Spleen (tissue), 13 donors: ENCODE measurements at regions of chr3 and their contacts with region 1.

Region 1: DNA sequence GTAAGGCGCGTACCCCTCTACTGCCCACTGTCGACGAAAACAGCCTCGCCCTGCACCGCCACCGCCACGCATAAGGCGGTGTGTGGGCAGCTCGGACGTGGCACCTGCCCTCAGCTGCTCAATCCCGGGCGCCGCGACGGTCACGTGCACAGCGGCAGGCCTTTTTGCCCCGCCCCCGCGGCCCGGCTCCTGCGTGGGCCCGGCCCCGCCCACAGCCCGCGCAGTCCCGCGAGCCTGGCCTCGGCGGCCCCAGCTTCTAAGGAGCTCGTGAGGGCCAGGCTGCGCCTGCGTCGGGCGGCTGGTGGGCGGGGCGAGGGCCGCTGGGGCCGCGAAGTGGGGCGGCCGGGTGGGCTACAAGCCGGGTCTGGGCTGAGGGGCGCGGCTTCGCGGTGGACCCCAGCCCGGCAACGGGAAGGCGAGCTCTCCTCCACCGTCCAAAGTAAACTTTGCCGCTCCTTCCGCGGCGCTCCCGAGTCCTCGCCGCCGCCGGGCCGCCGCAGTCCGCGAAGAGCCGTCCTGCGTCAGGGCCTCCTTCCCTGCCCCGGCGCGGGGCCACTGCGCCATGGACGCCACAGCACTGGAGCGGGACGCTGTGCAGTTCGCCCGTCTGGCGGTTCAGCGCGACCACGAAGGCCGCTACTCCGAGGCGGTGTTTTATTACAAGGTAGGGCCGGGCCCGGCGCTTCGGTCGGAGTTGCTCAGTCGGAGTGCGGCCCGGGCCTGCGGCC is at the start of gene CAPN7:
- DNase-seq: peak; percentile 99
- H3K4me3 ChIP-seq: peak within 1 kb of the TSS; percentile 59 to 98 (median 88)
- H3K27ac ChIP-seq: peak within 1 kb of the TSS; percentile 95 to 99 (median 96)
- H3K4me1 ChIP-seq: peaks cover 18 to 63% (median 50%) of the 10 kb centered on the region in 6 donors
- H3K27me3 ChIP-seq: no peaks in the 10 kb centered on the region
- CTCF ChIP-seq: peak in 10 of 11 experiments; percentile 23 to 65 (median 50)
- POLR2A ChIP-seq: peak in 2 of 3 donors; percentile 78
- total RNA-seq, gene CAPN7: 42.2 to 72.3 (median 49.9) TPM

Region 2: DNA sequence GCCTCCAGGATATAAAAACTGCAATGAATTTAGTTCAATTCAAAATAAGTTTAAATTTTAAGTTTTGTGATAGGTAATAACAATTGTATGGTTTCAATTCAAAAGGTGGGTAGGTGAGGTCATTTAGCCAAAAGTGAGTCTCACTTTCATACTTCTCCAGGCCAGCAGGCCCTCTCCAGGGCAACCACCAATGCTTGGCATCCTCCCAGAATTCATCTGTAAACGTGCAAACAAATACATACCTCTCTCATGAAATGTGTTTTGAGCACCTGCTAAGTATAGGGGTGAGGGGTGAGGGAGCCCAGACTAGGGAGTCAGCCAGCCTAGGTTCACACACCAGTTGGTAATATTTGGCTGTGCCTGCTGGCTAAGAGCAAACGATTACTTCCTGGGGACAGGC is 85.1 kb before region 1 on chr3:
- intact Hi-C with region 1: no loop called
- DNase-seq: no peak
- H3K4me3 ChIP-seq: no peak overlapping the region
- H3K27ac ChIP-seq: no peak overlapping the region
- H3K4me1 ChIP-seq: peaks cover 0 to 10% (median 5%) of the 10 kb centered on the region in 6 donors
- H3K27me3 ChIP-seq: peaks cover 0 to 13% (median 0%) of the 10 kb centered on the region in 7 donors
- CTCF ChIP-seq: no peak
- POLR2A ChIP-seq: no peak

Region 3: GRCh38 chr3:15404767-15405166 is 198.7 kb after region 1 on chr3:
- intact Hi-C with region 1: loop called (anchors 5 kb)
- DNase-seq: no peak
- H3K4me3 ChIP-seq: no peak overlapping the region
- H3K27ac ChIP-seq: peak overlapping the region in 5 of 8 donors; percentile 20 to 59 (median 30)
- H3K4me1 ChIP-seq: peaks cover 0 to 34% (median 10%) of the 10 kb centered on the region in 6 donors
- H3K27me3 ChIP-seq: no peaks in the 10 kb centered on the region
- CTCF ChIP-seq: no peak
- POLR2A ChIP-seq: no peak

Region 4: GRCh38 chr3:15562560-15562959 is 356.5 kb after region 1 on chr3:
- intact Hi-C with region 1: loop called (anchors 10 kb)
- DNase-seq: no peak
- H3K4me3 ChIP-seq: no peak overlapping the region
- H3K27ac ChIP-seq: no peak overlapping the region
- H3K4me1 ChIP-seq: peaks cover 3 to 6% (median 4%) of the 10 kb centered on the region in 6 donors
- H3K27me3 ChIP-seq: no peaks in the 10 kb centered on the region
- CTCF ChIP-seq: no peak
- POLR2A ChIP-seq: no peak